Endothelial cell of umbilical vein (primary cell): ENCODE measurements at regions of chr4 and their contacts with region 1.

Region 1: GRCh38 chr4:145936142-145936996 is 2.3 kb downstream of the ZNF827 start:
- DNase-seq: peak; percentile 79
- H3K4me3 ChIP-seq: peak overlapping the region; percentile 62 to 96 (median 81)
- H3K27ac ChIP-seq: peak overlapping the region; percentile 71
- H3K4me1 ChIP-seq: peaks cover 22% of the 10 kb centered on the region
- H3K27me3 ChIP-seq: no peaks in the 10 kb centered on the region
- CTCF ChIP-seq: peak in 1 of 2 donors; percentile 28
- POLR2A ChIP-seq: no peak

Region 2: DNA sequence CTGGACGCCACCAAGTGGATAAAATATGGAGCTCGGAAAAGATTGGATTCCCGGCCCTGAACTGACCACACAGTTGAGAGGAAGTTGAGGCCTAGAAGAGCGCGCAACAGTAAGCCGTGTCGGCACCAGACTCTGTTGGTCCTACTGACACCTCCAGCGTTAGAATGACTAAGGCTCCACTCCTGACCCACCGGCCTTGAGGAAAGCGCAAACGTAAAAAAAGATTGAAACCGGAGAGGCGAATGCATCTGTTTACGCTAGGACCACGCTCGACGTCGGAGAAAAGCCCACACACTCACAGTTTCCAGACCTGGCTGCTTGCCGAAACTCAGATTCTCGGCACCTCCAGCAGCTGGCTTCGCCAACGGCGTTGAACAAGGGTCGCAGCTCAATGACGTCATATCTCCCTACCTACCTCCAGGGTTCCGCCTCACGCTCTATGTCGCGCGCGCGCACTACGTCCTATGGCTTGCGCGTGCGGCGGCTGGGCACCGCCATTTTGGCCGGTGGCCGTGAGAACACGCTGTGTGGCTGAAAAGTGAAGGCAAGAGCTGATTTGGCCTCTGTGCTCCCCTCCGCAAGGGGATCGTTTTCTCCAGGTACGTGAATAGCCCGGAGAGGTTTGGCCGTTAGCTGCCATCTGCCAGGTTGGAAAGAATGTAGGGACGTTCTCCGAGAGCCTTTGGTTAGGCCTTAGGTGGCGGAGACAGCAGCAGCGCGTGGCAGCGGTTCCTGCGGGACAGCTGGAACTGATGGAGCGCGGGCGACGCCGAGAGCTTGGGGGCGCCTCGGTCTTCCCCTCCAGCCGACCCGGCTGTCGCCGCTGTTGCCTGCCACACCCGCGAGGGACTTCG is 838.3 kb before region 1 on chr4 and contains the starts of genes ABCE1 and ANAPC10:
- CTCF ChIA-PET with region 1: no interaction called
- POLR2A ChIA-PET with region 1: no interaction called
- dilution Hi-C with region 1: no loop called
- intact Hi-C with region 1: loop called (anchors 5 kb)
- DNase-seq: peak; percentile 98
- H3K4me3 ChIP-seq: peak within 1 kb of the TSS; percentile 45 to 95 (median 66)
- H3K27ac ChIP-seq: peak within 1 kb of the TSS; percentile 74
- H3K4me1 ChIP-seq: peaks cover 35% of the 10 kb centered on the region
- H3K27me3 ChIP-seq: no peaks in the 10 kb centered on the region
- CTCF ChIP-seq: peak in 1 of 2 donors; percentile 11
- POLR2A ChIP-seq: peak; percentile 82
- total RNA-seq, gene ABCE1: 107 and 114 TPM in 2 replicates
- total RNA-seq, gene ANAPC10: 21.4 and 24.0 TPM in 2 replicates

Region 3: GRCh38 chr4:145779319-145779801 is 157.0 kb before region 1 on chr4:
- CTCF ChIA-PET with region 1: no interaction called
- POLR2A ChIA-PET with region 1: no interaction called
- dilution Hi-C with region 1: no loop called
- intact Hi-C with region 1: loop called (anchors 5 kb)
- DNase-seq: peak; percentile 28
- H3K4me3 ChIP-seq: no peak overlapping the region
- H3K27ac ChIP-seq: peak overlapping the region; percentile 54
- H3K4me1 ChIP-seq: peaks cover 36% of the 10 kb centered on the region
- H3K27me3 ChIP-seq: no peaks in the 10 kb centered on the region
- CTCF ChIP-seq: no peak
- POLR2A ChIP-seq: no peak

Region 4: DNA sequence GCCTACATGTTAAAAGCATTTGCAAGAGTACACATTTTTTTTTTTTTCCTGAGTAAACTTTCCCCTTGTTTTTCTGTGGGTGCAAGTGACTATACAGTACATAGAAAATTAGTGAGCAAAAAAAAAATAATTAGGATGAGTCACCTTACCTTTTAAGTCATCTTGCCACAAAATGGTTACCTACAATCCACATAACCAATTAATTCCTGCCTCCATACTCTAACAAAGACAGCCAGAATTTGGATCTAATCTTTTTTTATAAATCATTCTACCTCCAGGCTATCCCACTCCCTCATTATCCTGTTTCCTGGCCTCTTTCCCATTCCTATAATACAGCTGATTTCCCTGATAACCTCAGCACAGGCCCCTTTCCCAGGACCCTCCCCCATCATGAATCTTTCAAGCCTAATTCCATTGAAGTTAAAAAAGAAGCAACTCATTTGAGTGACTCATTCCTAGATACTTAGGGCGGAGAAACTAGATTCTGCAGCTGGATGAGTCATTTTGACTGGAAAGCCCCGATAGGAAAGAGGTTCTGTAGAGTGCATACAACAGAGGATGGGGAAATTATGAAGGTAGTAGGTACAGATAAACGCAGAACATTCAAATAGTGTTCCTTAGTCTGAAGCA is 128.2 kb before region 1 on chr4:
- CTCF ChIA-PET with region 1: no interaction called
- POLR2A ChIA-PET with region 1: no interaction called
- dilution Hi-C with region 1: no loop called
- intact Hi-C with region 1: loop called (anchors 1 kb)
- DNase-seq: peak; percentile 93
- H3K4me3 ChIP-seq: no peak overlapping the region
- H3K27ac ChIP-seq: peak overlapping the region; percentile 82
- H3K4me1 ChIP-seq: peaks cover 44% of the 10 kb centered on the region
- H3K27me3 ChIP-seq: no peaks in the 10 kb centered on the region
- CTCF ChIP-seq: no peak
- POLR2A ChIP-seq: no peak

Region 5: GRCh38 chr4:145878501-145879435 is 57.6 kb before region 1 on chr4:
- CTCF ChIA-PET with region 1: no interaction called
- POLR2A ChIA-PET with region 1: no interaction called
- dilution Hi-C with region 1: no loop called
- intact Hi-C with region 1: loop called (anchors 2 kb)
- DNase-seq: peak; percentile 75
- H3K4me3 ChIP-seq: no peak overlapping the region
- H3K27ac ChIP-seq: no peak overlapping the region
- H3K4me1 ChIP-seq: peaks cover 12% of the 10 kb centered on the region
- H3K27me3 ChIP-seq: no peaks in the 10 kb centered on the region
- CTCF ChIP-seq: no peak
- POLR2A ChIP-seq: no peak

Region 6: DNA sequence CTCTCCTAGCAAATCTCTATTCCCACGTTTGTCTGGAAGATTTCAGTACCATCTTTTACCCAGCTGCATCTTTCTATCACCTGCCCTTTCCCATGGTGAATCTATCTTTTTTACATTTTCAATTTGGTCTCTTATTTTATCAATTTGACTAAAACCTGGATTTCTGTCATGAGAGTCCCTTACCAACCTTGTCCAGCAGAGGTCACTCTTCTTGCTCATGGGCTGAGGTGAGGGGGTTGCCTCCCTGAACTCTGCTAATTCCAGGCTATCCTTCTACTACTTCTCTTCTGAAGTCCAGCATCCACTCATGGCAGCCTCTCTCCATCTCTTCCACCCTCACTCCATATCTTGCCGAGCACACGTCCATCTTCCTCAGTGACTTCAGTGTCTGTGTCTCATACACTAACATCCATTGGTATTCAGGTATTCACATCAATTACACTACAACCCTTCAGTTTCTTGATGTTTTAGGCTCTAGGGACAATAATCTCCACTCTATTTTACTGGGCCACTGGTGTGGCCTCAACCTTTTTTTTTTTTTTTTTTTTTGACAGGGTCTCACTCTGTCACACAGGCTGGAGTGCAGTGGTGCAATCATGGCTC is 20.0 kb after region 1 on chr4:
- CTCF ChIA-PET with region 1: interaction called, 4 read pairs
- POLR2A ChIA-PET with region 1: no interaction called
- dilution Hi-C with region 1: no loop called
- intact Hi-C with region 1: loop called (anchors 1 kb)
- DNase-seq: peak; percentile 43
- H3K4me3 ChIP-seq: no peak overlapping the region
- H3K27ac ChIP-seq: no peak overlapping the region
- H3K4me1 ChIP-seq: peaks cover 10% of the 10 kb centered on the region
- H3K27me3 ChIP-seq: no peaks in the 10 kb centered on the region
- CTCF ChIP-seq: peak; percentile 68 to 77
- POLR2A ChIP-seq: no peak

Region 7: GRCh38 chr4:146175541-146176453 is 239.4 kb after region 1 on chr4 and contains the start of gene LSM6:
- CTCF ChIA-PET with region 1: no interaction called
- POLR2A ChIA-PET with region 1: no interaction called
- dilution Hi-C with region 1: no loop called
- intact Hi-C with region 1: no loop called
- DNase-seq: peak; percentile 86
- H3K4me3 ChIP-seq: peak within 1 kb of the TSS; percentile 63 to 80 (median 72)
- H3K27ac ChIP-seq: peak within 1 kb of the TSS; percentile 65
- H3K4me1 ChIP-seq: peaks cover 10% of the 10 kb centered on the region
- H3K27me3 ChIP-seq: no peaks in the 10 kb centered on the region
- CTCF ChIP-seq: peak in 1 of 2 donors; percentile 1
- POLR2A ChIP-seq: peak; percentile 53
- total RNA-seq, gene LSM6: 34.7 and 43.1 TPM in 2 replicates

Region 8: DNA sequence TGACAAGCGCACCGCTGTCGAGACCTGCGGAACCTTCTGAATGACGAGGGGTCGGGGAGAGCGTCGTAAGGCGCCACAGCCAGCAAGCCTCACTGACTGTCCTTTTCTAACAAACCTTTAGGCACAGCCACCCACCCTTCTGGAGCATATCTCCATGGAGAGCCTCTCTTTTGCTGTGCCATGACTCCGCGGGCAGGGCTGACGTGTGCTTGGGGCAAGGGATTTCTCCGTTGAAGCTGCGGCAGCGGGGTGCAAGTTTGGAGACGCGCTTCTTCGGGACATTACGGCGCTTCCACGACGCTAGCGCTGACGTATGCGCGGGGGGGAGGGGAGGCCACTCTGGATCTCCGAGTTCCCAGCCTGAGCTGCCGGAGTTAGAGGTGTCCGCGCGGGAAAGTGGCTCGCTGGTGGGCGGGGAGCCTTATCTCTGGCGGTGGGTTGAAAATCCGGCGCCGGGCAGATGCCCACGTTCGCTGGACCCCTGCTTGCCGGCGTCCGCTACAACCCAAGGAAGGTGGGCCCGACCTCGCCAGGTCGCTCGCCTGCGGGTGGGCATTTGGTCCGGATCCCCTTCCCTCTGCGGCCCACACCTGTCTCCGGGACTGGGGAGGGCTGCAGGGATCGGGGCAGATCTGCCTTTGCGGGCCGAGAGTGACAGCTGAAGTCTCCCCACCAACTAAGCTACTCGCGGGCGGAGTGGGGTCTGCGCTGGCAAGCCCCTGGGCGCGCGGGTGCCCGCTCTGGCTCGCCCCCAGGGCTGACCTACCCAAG is 585.9 kb after region 1 on chr4:
- CTCF ChIA-PET with region 1: no interaction called
- POLR2A ChIA-PET with region 1: no interaction called
- dilution Hi-C with region 1: no loop called
- intact Hi-C with region 1: loop called (anchors 10 kb)
- DNase-seq: peak; percentile 85
- H3K4me3 ChIP-seq: peak overlapping the region; percentile 84 to 99 (median 90)
- H3K27ac ChIP-seq: peak overlapping the region; percentile 73
- H3K4me1 ChIP-seq: peaks cover 17% of the 10 kb centered on the region
- H3K27me3 ChIP-seq: no peaks in the 10 kb centered on the region
- CTCF ChIP-seq: no peak
- POLR2A ChIP-seq: peak; percentile 38